Gastrocnemius medialis (tissue), 4 donors: ENCODE measurements at regions of chr21 and their contacts with region 1.

Region 1: DNA sequence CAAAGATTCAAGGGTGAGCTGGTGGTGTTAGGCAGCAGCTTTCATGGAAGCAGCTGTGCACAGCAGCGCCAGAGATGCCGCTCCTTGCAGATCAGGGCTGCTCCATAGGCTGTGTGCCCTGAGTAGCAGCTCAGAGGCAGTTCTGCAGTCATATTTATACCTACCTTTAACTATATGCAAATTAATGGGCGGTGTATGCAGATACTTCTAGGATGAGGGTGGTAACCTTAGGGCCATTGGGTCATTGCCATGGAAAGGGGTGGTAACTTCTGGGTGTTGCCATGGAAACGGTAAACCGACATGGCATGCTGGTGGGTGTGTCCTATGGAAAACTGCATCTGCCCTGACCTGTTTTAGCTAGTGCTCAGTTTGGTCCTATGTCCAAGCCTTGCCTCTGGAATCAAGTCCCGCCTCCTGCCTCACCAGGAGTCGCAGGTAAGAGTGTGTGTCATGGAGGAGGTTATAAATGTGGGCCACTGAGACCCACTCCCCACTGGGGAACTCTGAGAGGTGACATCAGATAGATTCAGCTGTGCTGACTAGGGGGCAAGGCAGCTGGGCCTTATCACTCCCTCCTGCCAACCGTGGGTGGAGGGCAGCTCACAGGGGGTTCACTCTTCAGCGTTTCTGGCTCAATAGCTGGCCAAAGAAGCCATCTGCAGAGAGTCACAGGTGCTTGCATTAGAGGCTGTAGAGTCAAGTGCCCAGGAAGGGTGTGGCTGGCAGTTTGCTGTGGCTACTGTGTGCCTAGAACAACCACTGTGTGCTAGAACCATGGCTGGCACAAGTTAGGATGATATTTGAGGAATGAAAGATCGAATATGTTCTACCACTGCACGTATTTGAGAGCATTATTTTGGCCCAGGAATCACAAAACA is 18.9 kb downstream of the BACE2 start:
- DNase-seq: no peak
- ATAC-seq: no peak
- H3K4me3 ChIP-seq: no peak overlapping the region
- H3K27ac ChIP-seq: no peak overlapping the region
- H3K4me1 ChIP-seq: peaks cover 0 to 10% of the 10 kb centered on the region in 2 donors
- H3K27me3 ChIP-seq: no peaks in the 10 kb centered on the region
- CTCF ChIP-seq: no peak
- POLR2A ChIP-seq: no peak

Region 2: GRCh38 chr21:40547906-40548513 is 638.9 kb before region 1 on chr21:
- in situ Hi-C with region 1: no loop called
- intact Hi-C with region 1: no loop called
- DNase-seq: no peak
- ATAC-seq: no peak
- H3K4me3 ChIP-seq: no peak overlapping the region
- H3K27ac ChIP-seq: no peak overlapping the region
- H3K4me1 ChIP-seq: no peaks in the 10 kb centered on the region
- H3K27me3 ChIP-seq: no peaks in the 10 kb centered on the region
- CTCF ChIP-seq: no peak
- POLR2A ChIP-seq: no peak

Region 3: DNA sequence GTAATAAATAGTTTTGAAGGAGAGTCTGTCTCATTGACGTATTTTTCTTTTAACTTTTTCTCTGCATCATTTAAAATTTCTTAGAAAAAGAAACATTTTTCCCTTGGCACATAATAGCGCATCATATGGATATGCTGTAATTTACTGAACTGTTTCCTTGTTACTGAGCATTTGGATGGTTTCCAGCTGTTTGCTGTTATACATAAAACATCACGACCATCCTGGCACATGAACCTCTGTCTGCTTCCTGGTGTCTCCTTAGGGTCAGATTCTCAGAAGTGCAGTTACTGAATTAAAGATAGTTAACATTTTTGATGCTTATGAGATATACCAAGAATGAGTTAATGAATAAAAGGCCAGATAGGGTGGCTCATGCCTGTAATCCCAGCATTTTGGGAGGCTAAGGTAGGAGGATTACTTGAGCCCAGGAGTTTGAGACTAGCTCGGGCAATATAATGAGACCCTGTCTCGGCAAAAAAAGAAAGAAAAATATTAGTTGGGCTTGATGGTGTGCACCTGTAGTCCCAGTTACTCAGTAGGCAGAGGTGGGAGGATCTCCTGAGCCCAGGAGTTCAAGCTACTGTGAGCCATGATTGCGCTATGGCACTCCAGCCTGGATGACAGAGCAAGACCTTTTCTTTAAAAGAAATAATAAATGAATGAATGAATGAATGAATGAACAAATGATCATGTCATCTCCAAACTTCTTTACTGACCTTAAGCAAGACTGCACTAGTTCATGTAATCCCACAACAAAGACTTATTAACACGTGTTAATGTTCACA is 48.5 kb after region 1 on chr21:
- in situ Hi-C with region 1: no loop called
- intact Hi-C with region 1: loop called (anchors 10 kb)
- DNase-seq: no peak
- ATAC-seq: no peak
- H3K4me3 ChIP-seq: no peak overlapping the region
- H3K27ac ChIP-seq: no peak overlapping the region
- H3K4me1 ChIP-seq: no peaks in the 10 kb centered on the region
- H3K27me3 ChIP-seq: no peaks in the 10 kb centered on the region
- CTCF ChIP-seq: no peak
- POLR2A ChIP-seq: no peak